AG04450 (cell line): ENCODE measurements at regions of chr15 and their contacts with region 1.

Region 1: DNA sequence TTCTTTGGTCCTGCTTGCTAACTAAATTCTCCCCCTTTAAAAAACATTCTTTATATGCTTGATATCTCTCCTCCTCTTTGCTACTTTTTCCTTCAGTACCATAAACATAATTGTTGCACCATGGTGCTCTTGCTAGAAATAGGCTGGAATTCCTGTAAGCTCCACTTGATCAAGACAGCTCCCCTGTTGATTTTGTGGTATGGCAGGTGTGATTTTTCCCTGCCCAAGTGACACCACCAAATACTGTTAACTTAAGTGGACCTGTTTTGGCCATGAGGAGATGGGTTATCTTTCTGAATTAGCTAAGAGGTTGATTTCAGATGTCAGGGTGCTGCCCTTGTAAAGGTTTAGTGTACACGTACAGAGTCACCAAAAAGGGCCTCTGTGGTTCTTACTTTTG is 205.3 kb downstream of the CDIN1 start:
- DNase-seq: no peak
- H3K4me3 ChIP-seq: no peak overlapping the region
- H3K27ac ChIP-seq: no peak overlapping the region
- H3K27me3 ChIP-seq: no peaks in the 10 kb centered on the region
- CTCF ChIP-seq: no peak

Region 2: GRCh38 chr15:36808411-36809160 is 23.9 kb after region 1 on chr15:
- CTCF ChIA-PET with region 1: no interaction called
- POLR2A ChIA-PET with region 1: no interaction called
- DNase-seq: no peak
- H3K4me3 ChIP-seq: no peak overlapping the region
- H3K27ac ChIP-seq: no peak overlapping the region
- H3K27me3 ChIP-seq: no peaks in the 10 kb centered on the region
- CTCF ChIP-seq: no peak

Region 3: DNA sequence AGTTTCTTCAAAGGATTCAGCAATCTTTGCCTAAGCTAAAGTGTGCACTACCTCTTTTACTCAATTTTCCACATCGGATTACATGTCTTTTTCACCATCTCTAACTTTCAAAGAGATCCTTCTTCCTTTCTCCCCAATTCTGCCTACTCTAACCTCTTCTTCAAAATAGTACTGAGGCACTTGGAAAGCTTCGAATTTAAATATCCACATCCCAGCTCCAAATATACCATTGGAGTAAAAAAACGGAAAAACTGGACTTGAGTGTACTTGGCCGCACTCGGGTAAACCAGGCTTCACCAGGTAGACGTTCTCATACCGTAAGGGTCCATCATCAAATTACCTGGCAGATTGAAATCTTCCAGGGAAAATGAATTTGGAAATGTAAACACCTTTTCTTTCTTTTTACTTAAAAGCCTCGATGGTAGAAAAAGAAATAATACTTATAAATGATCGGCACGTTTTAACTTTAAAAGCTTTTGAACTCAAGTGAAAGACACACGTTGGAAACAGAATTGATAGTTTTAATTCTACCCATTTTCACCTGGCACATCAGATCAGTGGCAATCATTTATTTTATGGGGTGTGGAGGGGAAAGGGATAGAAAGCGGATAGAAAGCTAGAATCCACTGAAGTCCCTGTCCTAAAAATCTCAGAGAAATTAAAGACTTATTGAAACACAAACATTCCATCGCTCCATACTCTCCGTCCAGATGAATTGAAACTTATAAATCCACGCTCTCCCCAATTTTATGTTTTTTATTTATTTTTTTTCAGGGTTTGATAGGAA is 323.9 kb after region 1 on chr15:
- CTCF ChIA-PET with region 1: no interaction called
- POLR2A ChIA-PET with region 1: interaction called, 12 read pairs
- DNase-seq: no peak
- H3K4me3 ChIP-seq: no peak overlapping the region
- H3K27ac ChIP-seq: no peak overlapping the region
- H3K27me3 ChIP-seq: peaks cover 18% of the 10 kb centered on the region
- CTCF ChIP-seq: no peak